Activated naive CD4-positive, alpha-beta T cell treated with anti-CD3 and anti-CD28 coated beads, Interleukin-2, amount 10 ng/mL, durations not matched to agents 7 days and 5 days (primary cell): ENCODE measurements at regions of chr5 and their contacts with region 1.

Region 1: DNA sequence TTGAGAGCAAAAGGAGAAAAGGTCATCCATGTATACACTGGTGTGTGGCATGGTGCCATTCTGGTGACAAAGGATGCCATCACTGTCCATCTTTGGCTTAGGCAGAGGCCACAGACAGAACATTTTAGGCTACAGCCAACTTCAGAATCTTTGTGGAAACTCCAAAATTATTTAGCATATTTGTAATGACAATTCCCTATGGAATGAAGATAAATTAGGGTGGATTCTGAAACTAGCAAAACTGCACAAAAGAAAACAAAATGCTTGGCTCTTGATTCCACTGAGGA is 92.5 kb downstream of the FBXW11 start:
- DNase-seq: no peak
- H3K4me3 Mint-ChIP-seq: no peak overlapping the region
- H3K27ac Mint-ChIP-seq: peak overlapping the region; percentile 47
- H3K4me1 Mint-ChIP-seq: peaks cover 16% of the 10 kb centered on the region
- H3K27me3 Mint-ChIP-seq: no peaks in the 10 kb centered on the region

Region 2: DNA sequence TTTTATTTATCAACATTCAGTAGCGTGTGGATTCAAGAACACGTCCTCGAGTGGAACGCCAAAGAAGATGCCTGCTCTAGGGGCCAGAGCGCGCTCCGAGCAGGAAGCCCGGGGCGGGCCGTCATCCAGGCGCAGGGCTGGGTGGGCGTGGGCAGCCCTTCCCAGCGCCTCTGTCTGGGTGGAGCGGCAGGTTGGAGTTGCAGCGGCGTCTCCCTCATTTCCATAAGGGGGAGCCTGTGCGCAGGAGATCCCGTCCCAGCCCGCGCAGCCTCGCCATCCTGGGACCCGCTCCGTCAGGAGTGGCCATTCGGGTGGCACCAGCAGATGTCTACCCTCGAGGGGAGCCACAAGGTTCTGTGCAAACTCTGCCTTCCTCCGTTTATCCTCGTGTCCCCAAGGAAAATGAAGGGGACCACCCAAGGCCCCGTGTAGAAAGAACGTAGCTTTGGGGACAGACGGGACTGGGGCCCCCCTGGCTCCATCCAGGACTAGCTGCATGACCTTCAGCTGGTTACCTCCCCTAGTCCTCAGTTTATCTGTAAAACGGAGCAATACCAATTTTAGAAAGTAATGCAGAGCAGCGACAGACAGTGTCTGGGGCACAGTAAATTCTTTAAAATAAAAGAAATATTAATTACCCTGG is 283.8 kb before region 1 on chr5:
- CTCF ChIA-PET with region 1: interaction called, 12 read pairs
- DNase-seq: no peak
- H3K4me3 Mint-ChIP-seq: no peak overlapping the region
- H3K27ac Mint-ChIP-seq: no peak overlapping the region
- H3K4me1 Mint-ChIP-seq: no peaks in the 10 kb centered on the region
- H3K27me3 Mint-ChIP-seq: peaks cover 51% of the 10 kb centered on the region

Region 3: DNA sequence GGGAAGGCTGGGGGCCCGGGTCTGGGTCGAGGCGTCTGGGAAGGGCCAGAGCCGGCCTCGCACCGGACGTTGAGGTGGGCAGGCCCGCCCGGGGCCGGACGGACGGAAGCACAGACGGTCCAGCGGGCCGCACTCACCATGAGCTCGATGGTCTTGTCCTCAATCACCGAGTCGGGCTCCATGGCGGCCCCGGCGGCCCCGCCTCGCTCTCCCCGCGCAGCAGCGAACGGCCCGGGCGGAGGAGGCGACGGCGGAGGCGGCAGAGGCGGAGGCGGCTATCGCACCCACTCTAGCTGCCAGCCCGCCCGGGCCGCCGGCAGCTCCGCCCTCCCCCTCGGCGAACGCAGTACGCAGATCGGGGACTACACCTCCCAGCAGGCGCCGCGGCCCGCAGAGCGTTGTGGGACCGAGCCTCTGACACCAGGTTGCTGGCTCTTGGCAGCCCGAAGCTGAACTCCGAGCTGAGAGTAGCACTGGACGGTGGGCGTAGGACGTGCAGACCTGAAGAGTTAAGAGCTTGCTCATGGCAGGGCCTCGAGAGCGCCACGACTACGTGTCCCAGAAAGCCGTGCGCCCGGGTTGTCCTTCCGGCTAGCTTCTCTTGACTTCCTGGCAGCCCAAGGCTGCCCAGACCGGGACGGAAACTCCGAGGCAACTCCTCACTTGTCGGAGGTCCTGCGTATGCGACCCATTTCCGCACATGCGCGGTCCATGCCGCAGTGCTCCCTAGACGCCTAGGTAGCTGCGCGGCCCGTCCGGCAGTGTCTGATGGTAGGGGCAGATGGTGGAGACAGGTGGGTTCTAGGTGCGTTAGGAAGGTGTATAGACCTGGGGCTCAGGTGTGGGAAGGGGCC is 92.6 kb after region 1 on chr5 and contains the start of gene FBXW11:
- CTCF ChIA-PET with region 1: interaction called, 29 read pairs
- DNase-seq: peak; percentile 97
- H3K4me3 Mint-ChIP-seq: peak within 1 kb of the TSS; percentile 87
- H3K27ac Mint-ChIP-seq: peak within 1 kb of the TSS; percentile 93
- H3K4me1 Mint-ChIP-seq: peaks cover 49% of the 10 kb centered on the region
- H3K27me3 Mint-ChIP-seq: no peaks in the 10 kb centered on the region

Region 4: DNA sequence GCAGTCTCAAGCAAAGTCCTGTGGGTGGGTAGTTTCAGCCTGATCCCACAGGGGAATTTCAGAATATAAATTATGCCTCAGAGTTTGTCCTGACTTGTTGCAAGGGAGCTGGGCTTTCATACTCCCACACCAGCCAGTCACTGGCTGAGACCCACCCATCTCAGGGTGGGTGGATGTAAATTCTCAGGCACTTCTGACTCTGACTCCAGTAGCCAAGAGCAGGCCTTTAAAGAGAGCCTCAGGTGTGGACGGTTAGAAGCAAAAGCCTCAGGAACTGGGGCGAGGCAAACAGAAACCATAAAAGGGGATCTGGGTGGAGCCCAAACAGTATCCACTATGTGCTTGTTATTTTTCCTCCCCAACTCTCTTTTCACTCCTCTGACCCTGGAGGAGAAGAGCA is 121.1 kb after region 1 on chr5:
- CTCF ChIA-PET with region 1: interaction called, 23 read pairs
- DNase-seq: no peak
- H3K4me3 Mint-ChIP-seq: no peak overlapping the region
- H3K27ac Mint-ChIP-seq: no peak overlapping the region
- H3K4me1 Mint-ChIP-seq: peaks cover 10% of the 10 kb centered on the region
- H3K27me3 Mint-ChIP-seq: peaks cover 3% of the 10 kb centered on the region

Region 5: DNA sequence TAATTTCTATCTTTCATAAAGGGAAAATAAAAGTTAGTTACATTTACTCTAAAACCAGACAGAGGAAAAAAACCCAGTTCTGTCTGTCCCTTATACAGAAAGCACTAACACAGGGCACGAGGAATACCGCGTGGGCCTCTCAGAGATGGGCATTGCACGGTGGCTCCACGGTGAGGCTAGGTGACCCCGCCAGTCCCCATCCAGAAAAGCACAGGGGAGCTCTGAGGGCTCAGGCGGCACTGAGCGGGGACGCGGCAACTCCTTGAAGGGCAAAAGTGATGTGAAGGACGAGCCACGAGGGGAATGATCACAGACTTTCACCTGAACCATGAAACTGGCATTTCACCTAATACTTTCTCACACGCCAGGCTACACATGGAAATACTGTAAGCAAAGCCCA is 128.3 kb after region 1 on chr5:
- CTCF ChIA-PET with region 1: interaction called, 47 read pairs
- DNase-seq: no peak
- H3K4me3 Mint-ChIP-seq: no peak overlapping the region
- H3K27ac Mint-ChIP-seq: peak overlapping the region; percentile 60
- H3K4me1 Mint-ChIP-seq: no peaks in the 10 kb centered on the region
- H3K27me3 Mint-ChIP-seq: peaks cover 3% of the 10 kb centered on the region

Region 6: DNA sequence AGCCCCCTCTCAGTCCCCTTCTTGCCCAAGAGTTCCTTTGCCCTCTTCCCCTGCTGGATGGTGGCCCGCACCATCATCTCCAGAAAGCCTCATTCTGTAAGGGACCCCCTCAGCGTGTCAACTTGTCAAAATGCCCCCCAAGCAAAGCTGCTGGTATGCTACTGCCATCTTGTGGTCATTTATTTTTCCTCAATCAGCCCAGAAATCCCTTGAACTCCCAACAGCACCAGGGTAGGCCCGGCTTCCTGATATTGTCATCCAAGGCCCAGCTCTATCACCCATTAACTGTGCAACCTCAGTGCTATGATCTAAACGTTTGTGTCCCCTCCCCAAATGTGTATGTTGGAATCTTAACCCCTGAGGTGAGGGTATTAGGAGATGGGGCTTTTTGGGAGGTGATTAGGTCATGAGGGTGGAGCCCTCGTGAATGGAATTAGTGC is 145.8 kb after region 1 on chr5:
- CTCF ChIA-PET with region 1: interaction called, 31 read pairs
- DNase-seq: no peak
- H3K4me3 Mint-ChIP-seq: no peak overlapping the region
- H3K27ac Mint-ChIP-seq: peak overlapping the region; percentile 85
- H3K4me1 Mint-ChIP-seq: peaks cover 15% of the 10 kb centered on the region
- H3K27me3 Mint-ChIP-seq: no peaks in the 10 kb centered on the region

Region 7: DNA sequence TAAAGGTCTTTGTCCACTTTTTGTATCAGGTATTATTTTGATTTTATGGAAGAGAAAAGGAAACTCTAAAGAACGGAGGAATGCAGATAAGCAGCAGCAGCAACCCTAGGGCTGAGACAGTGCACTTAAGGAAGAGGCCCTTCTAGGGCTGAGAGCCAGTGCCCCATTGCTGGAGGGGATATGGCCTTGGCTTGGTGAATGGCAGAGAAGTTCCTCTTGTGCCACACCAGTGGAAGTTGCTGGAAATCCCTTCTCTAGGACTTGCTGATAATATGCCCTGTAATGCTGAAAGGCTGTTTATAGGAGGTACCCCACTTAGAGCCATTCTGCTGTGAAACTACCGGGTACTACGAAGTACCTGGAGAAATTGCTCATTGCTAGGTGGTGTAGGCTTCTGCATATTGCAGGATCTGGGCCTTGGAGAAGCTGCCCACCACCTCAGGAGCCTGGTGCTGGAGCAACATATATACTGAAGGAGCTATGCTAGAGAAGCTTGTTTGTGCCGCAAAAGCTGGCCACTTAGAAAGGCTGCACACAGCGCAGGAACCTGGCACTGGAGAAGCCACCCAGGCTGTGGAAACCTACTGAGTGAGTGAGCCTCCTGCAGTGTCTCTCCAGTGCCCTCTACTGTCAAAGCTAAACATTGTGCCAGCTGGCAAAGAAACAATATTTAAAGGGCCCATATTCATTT is 379.3 kb after region 1 on chr5:
- CTCF ChIA-PET with region 1: interaction called, 17 read pairs
- DNase-seq: peak; percentile 78
- H3K4me3 Mint-ChIP-seq: no peak overlapping the region
- H3K27ac Mint-ChIP-seq: no peak overlapping the region
- H3K4me1 Mint-ChIP-seq: peaks cover 4% of the 10 kb centered on the region
- H3K27me3 Mint-ChIP-seq: peaks cover 40% of the 10 kb centered on the region